ENCODE measurements at regions of chr17 and their contacts with region 1.

Region 1: GRCh38 chr17:82559566-82560251 is 40.2 kb downstream of the FOXK2 start:
- DNase-seq: no peak
- H3K4me3 ChIP-seq: peak overlapping the region in 41 of 59 donors; percentile 5 to 61 (median 34)
- H3K27ac ChIP-seq: peak overlapping the region; percentile 17 to 95 (median 88)
- H3K27me3 ChIP-seq: no peaks in the 10 kb centered on the region
- CTCF ChIP-seq: no peak

Region 2: GRCh38 chr17:82518826-82519810 is 40.6 kb before region 1 on chr17 and contains the start of gene FOXK2:
- intact Hi-C with region 1: no loop called
- DNase-seq: peak; percentile 84 to 97 (median 92)
- H3K4me3 ChIP-seq: peak within 1 kb of the TSS; percentile 60 to 93 (median 81)
- H3K27ac ChIP-seq: peak within 1 kb of the TSS; percentile 82 to 99 (median 95)
- H3K27me3 ChIP-seq: no peaks in the 10 kb centered on the region
- CTCF ChIP-seq: peak in 8 of 56 donors; percentile 12 to 48 (median 20)
- total RNA-seq, gene FOXK2: 65.0 to 126 (median 81.9) TPM

Region 3: GRCh38 chr17:82592767-82593589 is 33.3 kb after region 1 on chr17:
- intact Hi-C with region 1: loop called in 1 of 2 experiments (anchors 5 kb)
- DNase-seq: peak in 9 of 10 donors; percentile 71 to 93 (median 83)
- H3K4me3 ChIP-seq: peak overlapping the region; percentile 46 to 96 (median 74)
- H3K27ac ChIP-seq: peak overlapping the region; percentile 95 to 100 (median 100)
- H3K27me3 ChIP-seq: no peaks in the 10 kb centered on the region
- CTCF ChIP-seq: peak in 4 of 56 donors; percentile 8 to 21 (median 10)